Aorta (tissue), 5 donors: ENCODE measurements at regions of chr3 and their contacts with region 1.

Region 1: DNA sequence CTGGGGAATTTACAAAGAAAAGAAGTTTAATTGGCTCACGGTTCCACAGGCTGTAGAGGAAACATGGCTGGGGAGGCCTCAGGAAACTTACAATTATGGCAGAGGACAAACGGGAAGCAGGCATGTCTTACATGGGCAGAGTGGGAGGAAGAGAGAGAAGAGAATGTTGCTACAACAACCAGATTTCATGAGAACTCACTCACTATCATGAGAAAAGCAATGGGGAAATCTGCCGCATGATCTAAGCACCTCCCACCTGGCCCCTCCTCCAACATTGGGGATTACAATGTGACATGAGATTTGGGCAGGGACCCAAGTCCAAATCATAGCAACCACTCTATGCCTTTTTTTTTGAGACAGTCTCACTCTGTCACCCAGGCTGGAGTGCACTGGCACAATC is 28.8 kb downstream of the PCNP start:
- DNase-seq: no peak
- ATAC-seq: no peak
- H3K4me3 ChIP-seq: no peak overlapping the region
- H3K27ac ChIP-seq: no peak overlapping the region
- H3K4me1 ChIP-seq: no peaks in the 10 kb centered on the region
- H3K27me3 ChIP-seq: no peaks in the 10 kb centered on the region

Region 2: DNA sequence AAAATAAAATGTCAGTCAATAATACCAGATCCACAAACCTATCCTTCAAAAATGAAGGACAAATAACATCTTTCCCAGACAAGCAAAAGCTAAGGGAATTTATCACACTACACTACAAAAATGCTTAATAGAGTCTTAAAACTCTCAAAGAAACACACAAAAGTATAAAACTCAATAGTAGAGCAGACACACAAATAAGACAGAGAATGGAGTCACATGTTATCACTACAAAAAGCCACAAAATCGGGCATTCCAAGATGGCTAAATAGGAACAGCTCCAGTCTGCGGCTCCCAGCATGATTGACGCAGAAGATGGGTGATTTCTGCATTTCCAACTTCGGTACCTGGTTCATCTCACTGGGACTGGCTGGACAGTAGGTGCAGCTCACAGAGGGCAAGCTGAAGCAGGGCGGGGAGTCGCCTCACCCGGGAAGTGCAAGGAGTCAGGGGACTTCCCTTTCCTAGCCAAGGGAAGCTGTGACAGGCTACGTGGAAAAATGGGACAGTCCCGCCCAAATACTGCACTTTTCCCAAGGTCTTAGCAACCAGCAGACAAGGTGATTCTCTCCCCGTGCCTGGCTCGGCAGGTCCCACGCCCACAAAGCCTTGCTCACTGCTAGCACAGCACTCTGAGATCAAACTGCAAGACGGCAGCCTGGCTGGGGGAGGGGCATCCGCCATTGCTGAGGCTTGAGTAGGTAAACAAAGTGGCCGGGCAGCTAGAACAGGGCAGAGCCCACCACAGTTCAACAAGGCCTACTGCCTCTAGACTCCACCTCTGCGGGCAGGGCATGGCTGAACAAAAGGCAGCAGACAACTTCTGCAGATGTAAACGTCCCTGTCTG is 136.0 kb before region 1 on chr3:
- intact Hi-C with region 1: loop called in 1 of 2 experiments (anchors 5 kb)
- DNase-seq: no peak
- ATAC-seq: no peak
- H3K4me3 ChIP-seq: no peak overlapping the region
- H3K27ac ChIP-seq: no peak overlapping the region
- H3K4me1 ChIP-seq: no peaks in the 10 kb centered on the region
- H3K27me3 ChIP-seq: no peaks in the 10 kb centered on the region